ENCODE measurements at regions of chr11 and their contacts with region 1.

Region 1: DNA sequence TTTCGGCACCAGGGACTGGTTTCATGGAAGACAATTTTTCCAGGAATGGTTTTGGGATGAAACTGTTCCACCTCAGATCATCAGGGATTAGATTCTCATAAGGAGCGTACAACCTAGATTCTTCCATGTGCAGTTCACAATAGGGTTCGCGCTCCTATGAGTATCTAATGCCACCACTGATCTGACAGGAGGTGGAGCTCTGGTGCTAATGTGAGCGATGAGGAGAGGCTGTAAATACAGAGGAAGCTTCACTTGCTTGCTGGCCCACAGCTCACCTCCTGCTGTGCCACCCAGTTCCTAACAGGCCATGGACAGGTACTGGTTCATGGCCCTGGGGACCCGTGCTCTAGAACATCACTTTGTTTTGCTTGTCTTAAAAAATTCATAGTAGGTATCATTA is 41.8 kb upstream of the AMPD3 start:
- DNase-seq: no peak
- ATAC-seq: peak in 3 of 4 donors; percentile 42 to 45 (median 43)
- H3K4me3 ChIP-seq: no peak overlapping the region
- H3K27ac ChIP-seq: no peak overlapping the region
- H3K4me1 ChIP-seq: peaks cover 10% of the 10 kb centered on the region
- H3K27me3 ChIP-seq: no peaks in the 10 kb centered on the region
- CTCF ChIP-seq: no peak

Region 2: GRCh38 chr11:10233581-10233980 is 179.7 kb before region 1 on chr11:
- intact Hi-C with region 1: no loop called
- DNase-seq: no peak
- ATAC-seq: no peak
- H3K4me3 ChIP-seq: no peak overlapping the region
- H3K27ac ChIP-seq: no peak overlapping the region
- H3K4me1 ChIP-seq: no peaks in the 10 kb centered on the region
- H3K27me3 ChIP-seq: no peaks in the 10 kb centered on the region
- CTCF ChIP-seq: no peak

Region 3: DNA sequence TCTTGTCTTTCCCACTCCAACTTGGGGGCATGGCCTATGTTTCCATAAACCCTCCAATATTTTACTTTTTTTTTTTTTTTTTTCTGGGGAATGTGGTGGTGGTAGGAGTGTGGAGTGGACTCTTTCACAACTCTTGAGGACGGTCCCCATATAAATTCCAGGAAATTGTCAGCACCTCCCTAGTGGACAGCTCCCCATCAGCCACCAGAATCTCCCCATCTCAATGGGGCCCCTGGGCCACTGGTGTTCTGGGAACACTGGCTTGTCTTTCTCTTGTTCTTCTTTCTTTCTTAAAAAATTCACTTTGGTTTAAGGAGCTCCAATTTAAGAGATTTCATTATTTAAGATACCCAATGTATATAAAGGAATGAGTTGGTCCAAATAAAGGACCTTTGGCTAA is 34.2 kb before region 1 on chr11:
- intact Hi-C with region 1: no loop called
- DNase-seq: no peak
- ATAC-seq: peak in 1 of 4 donors; percentile 49
- H3K4me3 ChIP-seq: no peak overlapping the region
- H3K27ac ChIP-seq: no peak overlapping the region
- H3K4me1 ChIP-seq: peaks cover 34% of the 10 kb centered on the region
- H3K27me3 ChIP-seq: no peaks in the 10 kb centered on the region
- CTCF ChIP-seq: no peak

Region 4: GRCh38 chr11:10455637-10456487 is 42.6 kb after region 1 on chr11:
- intact Hi-C with region 1: loop called (anchors 2 kb)
- DNase-seq: peak; percentile 53 to 80
- ATAC-seq: peak; percentile 45 to 69 (median 58)
- H3K4me3 ChIP-seq: peak overlapping the region; percentile 75
- H3K27ac ChIP-seq: peak overlapping the region; percentile 96
- H3K4me1 ChIP-seq: peaks cover 38% of the 10 kb centered on the region
- H3K27me3 ChIP-seq: peaks cover 0 to 4% (median 0%) of the 10 kb centered on the region in 3 donors
- CTCF ChIP-seq: no peak

Region 5: DNA sequence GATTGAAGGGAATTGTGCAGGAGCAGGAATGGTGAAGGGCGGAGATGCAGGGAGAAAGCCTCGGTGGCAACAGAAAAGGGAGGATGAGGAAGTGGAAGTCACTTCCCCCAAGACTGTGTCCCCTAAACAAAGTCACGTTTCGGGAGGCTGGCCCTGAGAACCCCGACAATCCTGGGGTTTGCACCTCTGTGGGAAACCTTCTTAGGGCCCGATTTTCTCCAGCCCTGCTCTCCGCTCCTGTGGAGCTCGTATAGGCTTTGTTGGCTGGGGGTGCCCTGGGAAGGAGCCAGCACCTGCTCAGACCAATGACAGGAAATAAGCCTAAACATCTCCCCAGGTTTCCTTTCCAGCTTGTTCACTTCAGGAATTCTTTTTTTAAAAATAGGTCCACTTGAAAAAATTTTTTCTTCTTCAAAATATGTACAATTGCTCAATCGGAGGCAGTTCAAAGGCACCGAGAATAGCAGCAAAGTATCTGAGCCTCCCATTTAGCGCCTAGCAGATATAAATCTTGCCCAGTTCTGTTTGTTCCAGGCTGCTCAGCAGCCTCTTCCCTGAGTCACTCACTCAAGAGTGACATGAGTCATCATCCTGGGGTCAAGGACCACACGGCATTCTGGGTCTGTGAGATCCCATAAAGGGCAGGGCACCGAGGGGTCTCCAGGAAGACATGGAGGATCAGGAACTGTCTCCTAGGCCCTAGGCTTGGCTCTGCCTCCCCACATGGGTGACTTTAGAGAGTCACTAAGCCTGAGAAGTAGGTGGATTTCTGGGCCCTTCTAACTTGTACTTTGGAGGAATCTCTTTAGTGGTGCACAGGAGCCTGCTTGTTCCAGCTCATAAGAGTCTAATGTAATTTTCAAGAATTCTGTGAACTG is 246.3 kb after region 1 on chr11:
- intact Hi-C with region 1: loop called (anchors 5 kb)
- DNase-seq: peak; percentile 50 to 63
- ATAC-seq: peak; percentile 88 to 97 (median 94)
- H3K4me3 ChIP-seq: no peak overlapping the region
- H3K27ac ChIP-seq: peak overlapping the region; percentile 69
- H3K4me1 ChIP-seq: peaks cover 29% of the 10 kb centered on the region
- H3K27me3 ChIP-seq: no peaks in the 10 kb centered on the region
- CTCF ChIP-seq: no peak